AG04449 (cell line): ENCODE measurements at regions of chr16 and their contacts with region 1.

Region 1: DNA sequence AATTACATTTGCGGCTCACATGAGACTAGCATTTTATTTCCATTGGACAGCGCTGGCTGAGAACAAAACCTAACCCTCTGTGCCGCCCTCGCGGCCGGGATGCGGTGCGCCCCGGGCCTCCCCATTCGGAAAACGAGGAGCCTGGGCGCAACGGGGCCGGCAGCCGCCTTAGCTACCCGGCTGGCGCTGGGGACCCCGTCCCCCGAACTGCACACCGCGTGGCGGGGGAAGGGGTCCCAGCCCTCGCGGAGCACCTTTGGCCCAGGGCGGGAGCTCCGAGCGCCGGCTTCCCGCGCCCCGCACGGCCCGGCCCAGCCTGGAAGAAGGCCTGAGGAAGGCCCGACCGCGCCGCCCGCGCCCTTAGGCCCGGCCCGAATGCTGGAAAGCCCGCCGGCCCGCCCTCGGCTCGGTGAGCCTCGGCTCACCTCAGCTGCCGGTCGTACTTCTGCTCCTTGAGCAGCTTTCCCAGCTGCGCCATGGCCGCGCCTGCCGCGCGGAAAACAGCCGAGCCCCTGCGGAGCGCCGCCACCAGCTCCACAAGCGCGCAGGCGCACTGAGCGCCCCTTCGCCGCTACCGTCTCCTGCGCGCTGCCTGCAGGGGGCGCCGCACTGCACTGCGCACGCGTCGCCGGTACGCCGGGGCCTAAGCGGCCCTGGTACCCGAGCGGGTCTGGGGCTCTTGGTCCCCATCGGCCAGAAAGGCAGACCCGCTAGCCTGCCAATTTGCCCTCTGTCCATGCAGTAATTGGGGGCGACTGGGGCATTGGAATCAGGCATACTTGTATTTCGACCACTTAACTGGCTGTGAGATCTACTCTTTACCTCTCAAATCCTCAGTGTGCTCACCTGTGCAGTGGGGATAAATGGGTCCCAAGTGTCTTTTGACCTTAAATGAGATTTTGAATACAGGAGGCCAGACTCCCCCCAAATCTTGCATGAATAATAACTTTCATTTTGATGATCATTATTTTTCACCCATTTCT is at the start of gene NAE1:
- DNase-seq: no peak
- H3K4me3 ChIP-seq: peak within 1 kb of the TSS; percentile 72
- CTCF ChIP-seq: peak; percentile 96

Region 2: GRCh38 chr16:66740010-66740409 is 90.7 kb before region 1 on chr16:
- CTCF ChIA-PET with region 1: interaction called, 14 read pairs
- POLR2A ChIA-PET with region 1: no interaction called
- DNase-seq: no peak
- H3K4me3 ChIP-seq: no peak overlapping the region
- CTCF ChIP-seq: peak; percentile 44

Region 3: GRCh38 chr16:66758086-66758485 is 72.6 kb before region 1 on chr16:
- CTCF ChIA-PET with region 1: interaction called, 19 read pairs
- POLR2A ChIA-PET with region 1: no interaction called
- DNase-seq: no peak
- H3K4me3 ChIP-seq: no peak overlapping the region
- CTCF ChIP-seq: no peak

Region 4: DNA sequence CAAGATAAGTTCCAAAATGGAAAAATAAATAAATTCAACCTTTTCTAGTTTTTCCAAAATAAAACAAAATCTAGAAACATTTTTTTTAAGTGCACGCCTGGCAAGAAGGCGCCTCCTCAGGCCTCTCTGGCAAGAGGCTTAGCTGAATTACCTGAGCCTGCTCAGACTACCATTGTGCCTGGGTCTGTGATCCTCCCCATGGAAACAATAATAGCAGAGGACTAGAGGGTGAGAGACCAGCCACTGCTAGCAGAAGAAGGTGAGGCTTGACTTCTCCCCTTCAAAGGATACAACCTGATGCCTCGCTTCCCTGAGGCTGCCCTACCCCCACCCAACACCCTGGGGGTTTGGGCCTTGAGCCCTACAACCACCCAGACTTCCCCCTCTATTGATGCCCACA is 44.2 kb before region 1 on chr16:
- CTCF ChIA-PET with region 1: interaction called, 11 read pairs
- POLR2A ChIA-PET with region 1: no interaction called
- DNase-seq: no peak
- H3K4me3 ChIP-seq: no peak overlapping the region
- CTCF ChIP-seq: no peak

Region 5: GRCh38 chr16:66810391-66810790 is 20.3 kb before region 1 on chr16:
- CTCF ChIA-PET with region 1: interaction called, 100 read pairs
- POLR2A ChIA-PET with region 1: no interaction called
- DNase-seq: no peak
- H3K4me3 ChIP-seq: no peak overlapping the region
- CTCF ChIP-seq: no peak

Region 6: GRCh38 chr16:66858740-66859396 is 28.2 kb after region 1 on chr16:
- CTCF ChIA-PET with region 1: interaction called, 61 read pairs
- POLR2A ChIA-PET with region 1: no interaction called
- DNase-seq: no peak
- H3K4me3 ChIP-seq: no peak overlapping the region
- CTCF ChIP-seq: no peak

Region 7: GRCh38 chr16:67006930-67007658 is 176.4 kb after region 1 on chr16:
- CTCF ChIA-PET with region 1: no interaction called
- POLR2A ChIA-PET with region 1: no interaction called
- DNase-seq: no peak
- H3K4me3 ChIP-seq: no peak overlapping the region
- CTCF ChIP-seq: no peak

Region 8: DNA sequence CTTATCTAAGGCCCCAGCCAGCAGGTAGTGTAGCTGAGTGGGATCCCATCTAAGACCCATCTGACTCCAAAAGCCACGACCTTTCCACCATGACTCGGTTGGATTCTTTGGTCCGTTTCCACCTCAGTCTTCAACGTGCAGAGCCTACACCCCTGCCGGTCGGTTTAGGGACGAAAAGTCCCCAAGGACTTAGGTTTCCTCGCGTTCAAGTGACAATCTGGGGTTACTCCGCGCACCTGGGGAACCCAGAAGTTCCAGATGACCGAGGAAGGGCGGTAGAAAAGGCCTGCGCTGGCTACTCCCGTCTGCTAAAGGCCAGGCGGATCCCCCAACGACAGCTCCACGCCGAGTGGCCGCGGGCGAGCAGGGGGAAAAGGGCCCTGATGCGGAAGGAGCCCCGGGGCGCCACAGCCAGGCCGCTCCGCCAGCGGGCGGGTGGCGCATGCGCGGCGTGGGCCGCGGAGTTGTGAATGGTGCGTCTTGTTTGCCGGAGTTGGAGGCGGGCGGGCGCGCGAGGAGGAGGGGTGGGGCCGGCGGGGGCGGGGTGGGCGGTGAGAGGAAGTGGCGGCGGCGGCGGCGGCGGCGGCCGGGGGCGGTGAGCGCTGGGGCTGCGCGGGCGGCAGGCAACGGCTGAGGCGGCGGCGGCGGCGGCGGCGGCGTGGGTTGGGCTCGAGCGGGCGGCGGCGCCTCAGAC is 198.0 kb after region 1 on chr16 and contains the start of gene CBFB:
- CTCF ChIA-PET with region 1: no interaction called
- POLR2A ChIA-PET with region 1: no interaction called
- DNase-seq: peak; percentile 19
- H3K4me3 ChIP-seq: peak within 1 kb of the TSS; percentile 78
- CTCF ChIP-seq: no peak